SK-N-SH (cell line): ENCODE measurements at regions of chr17 and their contacts with region 1.

Region 1: GRCh38 chr17:73645050-73645978 is 1.1 kb upstream of the SDK2 start:
- DNase-seq: peak; percentile 90
- H3K4me3 ChIP-seq: peak overlapping the region in 1 of 2 experiments; percentile 35; a peak in 3 of 4 replicates
- H3K27ac ChIP-seq: no peak overlapping the region
- H3K4me1 ChIP-seq: peaks cover 0 to 21% of the 10 kb centered on the region in 2 experiments; a peak in 2 of 4 replicates
- H3K27me3 ChIP-seq: peaks cover 41% of the 10 kb centered on the region
- CTCF ChIP-seq: no peak
- EP300 ChIP-seq: no peak
- RAD21 ChIP-seq: no peak

Region 2: DNA sequence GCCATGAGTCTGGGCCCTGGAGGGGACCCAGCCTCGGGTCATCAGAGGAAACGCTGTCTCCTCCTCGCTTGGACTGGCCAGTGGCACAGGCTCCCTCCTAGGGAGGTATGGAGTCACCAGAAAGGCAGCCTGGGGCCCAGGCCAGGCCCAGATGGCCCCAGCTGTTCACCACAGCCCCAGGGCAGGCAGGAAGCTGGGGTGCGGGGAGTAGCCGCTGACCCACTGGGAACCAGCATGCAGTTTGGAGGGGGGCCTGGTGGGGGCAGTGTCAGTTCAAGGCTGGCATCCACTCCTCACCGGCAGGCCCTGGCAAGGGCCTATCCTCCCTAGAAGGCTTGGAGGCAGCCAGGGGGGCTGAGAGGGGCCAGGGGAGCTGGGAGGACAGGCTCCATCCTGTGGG is 49.8 kb before region 1 on chr17:
- CTCF ChIA-PET with region 1: interaction called, 30 read pairs
- POLR2A ChIA-PET with region 1: interaction called, 3 read pairs
- DNase-seq: peak; percentile 96
- H3K4me3 ChIP-seq: no peak overlapping the region
- H3K27ac ChIP-seq: no peak overlapping the region
- H3K4me1 ChIP-seq: peaks cover 0 to 36% of the 10 kb centered on the region in 2 experiments; a peak in 1 of 4 replicates
- H3K27me3 ChIP-seq: no peaks in the 10 kb centered on the region
- CTCF ChIP-seq: 0 out of 2 replicates have a peak, but pooled peaks have one; percentile 19
- EP300 ChIP-seq: peak in 1 of 2 experiments; percentile 81; a peak in 2 of 4 replicates
- RAD21 ChIP-seq: peak; percentile 82

Region 3: GRCh38 chr17:73657473-73658116 is 12.3 kb after region 1 on chr17:
- CTCF ChIA-PET with region 1: interaction called, 15 read pairs
- POLR2A ChIA-PET with region 1: no interaction called
- DNase-seq: peak; percentile 70
- H3K4me3 ChIP-seq: no peak overlapping the region
- H3K27ac ChIP-seq: no peak overlapping the region
- H3K4me1 ChIP-seq: no peaks in the 10 kb centered on the region
- H3K27me3 ChIP-seq: no peaks in the 10 kb centered on the region
- CTCF ChIP-seq: peak; percentile 27
- EP300 ChIP-seq: no peak
- RAD21 ChIP-seq: peak; percentile 62

Region 4: DNA sequence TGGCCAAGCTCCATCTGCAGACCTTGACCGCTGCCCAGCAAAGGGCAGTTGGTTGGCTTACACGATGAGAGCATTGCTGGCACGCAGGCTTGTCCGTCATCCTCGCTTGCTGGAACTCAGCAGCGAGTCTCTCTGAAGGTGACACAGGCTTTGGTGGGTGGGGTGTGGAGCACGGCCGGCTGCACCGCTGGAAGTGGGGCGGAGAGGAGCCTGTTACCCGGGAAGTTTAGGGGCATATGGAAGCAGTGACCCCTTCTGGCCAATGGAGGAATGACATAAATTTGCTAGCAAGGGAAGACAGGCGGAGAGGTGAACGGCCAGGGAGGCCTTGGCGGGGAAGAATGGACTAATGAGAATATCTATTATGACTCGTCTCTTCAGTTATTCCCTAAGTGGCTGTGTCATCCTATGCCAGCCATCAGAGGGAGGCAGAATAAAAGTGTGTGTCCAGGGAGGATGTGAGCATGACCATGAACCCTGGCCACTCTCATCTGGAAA is 64.8 kb after region 1 on chr17:
- CTCF ChIA-PET with region 1: interaction called, 64 read pairs
- POLR2A ChIA-PET with region 1: no interaction called
- DNase-seq: peak; percentile 81
- H3K4me3 ChIP-seq: no peak overlapping the region; a peak in 1 of 4 replicates
- H3K27ac ChIP-seq: no peak overlapping the region
- H3K4me1 ChIP-seq: peaks cover 0 to 15% of the 10 kb centered on the region in 2 experiments; a peak in 2 of 4 replicates
- H3K27me3 ChIP-seq: no peaks in the 10 kb centered on the region
- CTCF ChIP-seq: peak; percentile 51
- EP300 ChIP-seq: no peak
- RAD21 ChIP-seq: peak; percentile 87

Region 5: DNA sequence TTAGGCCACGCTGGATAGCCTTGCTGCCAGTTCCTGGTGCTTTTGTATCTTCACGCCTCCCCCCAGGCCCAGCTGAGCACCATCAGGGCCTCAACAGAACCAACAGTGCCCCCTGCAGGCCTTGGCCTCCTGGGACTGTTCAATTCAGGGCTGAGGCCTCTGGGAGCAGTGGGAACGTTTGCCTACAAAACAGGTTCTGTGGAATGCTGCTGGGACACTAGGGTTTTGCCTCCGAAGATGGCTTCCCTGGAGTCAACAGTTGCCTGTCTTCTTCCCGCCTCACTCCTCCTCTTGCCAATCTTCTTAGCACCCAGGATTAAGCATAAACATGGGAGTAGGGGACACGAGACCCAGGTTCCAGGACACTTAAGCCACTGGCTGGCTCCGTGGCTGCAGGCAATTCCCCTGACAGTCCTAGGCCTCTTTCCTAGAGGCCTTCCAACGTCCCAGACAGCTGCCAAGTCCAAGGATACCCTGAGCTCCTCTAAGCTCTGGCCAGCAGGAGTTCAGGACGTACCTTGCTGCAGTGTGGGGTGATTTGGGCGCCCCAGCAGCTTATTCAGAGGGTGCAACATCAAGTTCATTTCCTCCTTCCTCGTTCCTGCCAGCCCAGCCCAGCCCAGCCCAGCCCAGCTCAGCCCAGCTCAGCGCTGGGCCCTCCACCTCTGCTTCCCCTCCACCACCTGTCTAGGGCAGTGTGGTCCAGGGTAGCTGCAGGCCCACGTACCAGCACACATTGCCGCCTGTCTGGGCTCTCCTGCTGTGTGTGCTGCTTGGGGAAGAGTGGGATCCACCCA is 311.6 kb after region 1 on chr17:
- CTCF ChIA-PET with region 1: interaction called, 27 read pairs
- POLR2A ChIA-PET with region 1: no interaction called
- DNase-seq: peak; percentile 89
- H3K4me3 ChIP-seq: no peak overlapping the region
- H3K27ac ChIP-seq: no peak overlapping the region
- H3K4me1 ChIP-seq: peaks cover 0 to 6% of the 10 kb centered on the region in 2 experiments; a peak in 1 of 4 replicates
- H3K27me3 ChIP-seq: no peaks in the 10 kb centered on the region
- CTCF ChIP-seq: no peak; the same call in 1 of the 2 replicates
- EP300 ChIP-seq: no peak
- RAD21 ChIP-seq: peak; percentile 82

Region 6: GRCh38 chr17:74008196-74008595 is 362.9 kb after region 1 on chr17:
- CTCF ChIA-PET with region 1: interaction called, 20 read pairs
- POLR2A ChIA-PET with region 1: no interaction called
- DNase-seq: peak; percentile 75
- H3K4me3 ChIP-seq: no peak overlapping the region
- H3K27ac ChIP-seq: no peak overlapping the region
- H3K4me1 ChIP-seq: peaks cover 0 to 22% of the 10 kb centered on the region in 2 experiments; a peak in 1 of 4 replicates
- H3K27me3 ChIP-seq: no peaks in the 10 kb centered on the region
- CTCF ChIP-seq: no peak
- EP300 ChIP-seq: no peak
- RAD21 ChIP-seq: peak; percentile 53